ENCODE measurements at regions of chr17 and their contacts with region 1.

Region 1: GRCh38 chr17:38485146-38485468 is 56.8 kb downstream of the ARHGAP23 start:
- DNase-seq: no peak
- ATAC-seq: no peak
- H3K4me3 ChIP-seq: no peak overlapping the region
- H3K27ac ChIP-seq: peak overlapping the region in 7 of 12 donors; percentile 10 to 79 (median 58)
- H3K4me1 ChIP-seq: peaks cover 0 to 33% (median 13%) of the 10 kb centered on the region in 12 donors
- H3K27me3 ChIP-seq: no peaks in the 10 kb centered on the region
- CTCF ChIP-seq: no peak
- POLR2A ChIP-seq: no peak

Region 2: DNA sequence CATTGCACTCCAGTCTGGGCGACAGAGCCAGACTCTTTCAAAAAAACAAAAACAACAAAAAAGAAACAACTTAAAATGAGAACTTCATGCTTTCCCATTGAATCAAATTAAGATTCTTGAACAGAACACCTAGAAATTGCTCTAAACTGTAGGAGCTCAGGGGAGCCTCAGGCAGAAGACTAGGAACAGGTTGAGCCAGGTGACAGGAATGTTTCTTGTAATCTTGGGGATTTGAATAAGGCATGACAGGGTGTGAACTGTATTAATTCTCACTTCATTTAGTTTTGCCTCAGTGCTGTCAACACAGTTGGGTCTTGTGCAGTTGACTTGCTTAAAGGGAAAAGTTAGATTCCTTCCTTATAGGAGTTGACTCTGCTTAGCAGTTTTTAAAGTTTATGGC is 105.7 kb before region 1 on chr17:
- intact Hi-C with region 1: no loop called
- DNase-seq: no peak
- ATAC-seq: no peak
- H3K4me3 ChIP-seq: no peak overlapping the region
- H3K27ac ChIP-seq: no peak overlapping the region
- H3K4me1 ChIP-seq: no peaks in the 10 kb centered on the region
- H3K27me3 ChIP-seq: no peaks in the 10 kb centered on the region
- CTCF ChIP-seq: no peak
- POLR2A ChIP-seq: no peak

Region 3: DNA sequence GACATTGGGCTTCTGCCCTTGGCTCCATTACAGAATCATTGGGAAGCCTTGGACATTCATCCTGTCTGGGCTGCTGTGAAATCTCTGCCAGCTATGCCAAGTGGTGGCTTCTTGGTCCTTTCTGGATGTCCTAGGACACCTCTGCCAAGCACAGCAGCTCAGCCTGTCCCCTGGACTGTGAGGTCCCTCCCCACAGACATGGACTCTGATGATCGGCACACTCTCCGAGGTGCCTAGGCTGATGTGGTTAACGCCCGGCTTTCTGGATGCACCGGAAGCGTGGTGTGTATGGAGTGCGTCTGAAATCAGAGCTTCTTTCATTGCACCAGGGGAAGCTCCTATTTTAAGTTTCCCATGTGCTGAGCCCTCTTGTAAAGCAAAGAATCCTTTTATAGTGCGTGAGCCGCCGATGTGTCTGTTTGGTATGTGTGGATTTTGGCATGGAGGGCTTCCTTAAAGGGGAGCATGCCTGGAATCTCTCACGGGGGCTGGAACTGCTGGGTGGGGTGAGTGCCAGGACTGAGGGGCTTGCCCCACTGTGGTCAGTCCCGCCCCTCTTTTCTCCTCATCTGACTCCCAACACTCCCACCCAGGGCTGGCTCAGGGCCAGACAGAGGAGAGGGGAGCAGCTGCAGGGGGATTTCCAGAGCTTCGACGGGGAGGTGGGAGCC is 63.8 kb before region 1 on chr17:
- intact Hi-C with region 1: loop called (anchors 2 to 5 kb)
- DNase-seq: no peak
- ATAC-seq: peak; percentile 4 to 31 (median 12)
- H3K4me3 ChIP-seq: peak overlapping the region in 2 of 12 donors; percentile 15 to 17
- H3K27ac ChIP-seq: peak overlapping the region in 10 of 12 donors; percentile 27 to 79 (median 52)
- H3K4me1 ChIP-seq: peaks cover 0 to 65% (median 33%) of the 10 kb centered on the region in 12 donors
- H3K27me3 ChIP-seq: peaks cover 0 to 31% (median 19%) of the 10 kb centered on the region in 9 donors
- CTCF ChIP-seq: no peak
- POLR2A ChIP-seq: no peak

Region 4: DNA sequence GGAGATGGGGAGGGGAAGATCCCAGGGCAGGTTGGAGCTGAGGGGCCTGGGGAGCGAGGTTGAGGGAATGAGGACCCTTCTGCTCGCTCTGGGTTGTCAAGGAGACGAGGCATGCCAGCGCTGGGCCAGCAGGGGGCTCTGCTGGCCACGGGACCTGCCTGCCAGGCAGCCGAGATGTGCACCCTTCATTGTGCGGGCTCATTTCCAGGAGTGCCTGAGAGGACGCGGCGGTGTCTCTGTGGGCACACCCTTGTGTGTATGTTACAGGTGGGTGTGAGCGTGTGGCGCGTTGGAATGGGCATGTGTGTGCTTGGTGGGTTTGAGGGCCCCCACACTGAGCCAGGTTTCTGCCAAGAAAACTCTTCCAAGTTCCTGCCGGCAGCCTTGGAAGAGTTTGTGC is 41.0 kb before region 1 on chr17:
- intact Hi-C with region 1: loop called (anchors 2 to 5 kb)
- DNase-seq: peak; percentile 74 to 89 (median 77)
- ATAC-seq: peak; percentile 63 to 70 (median 70)
- H3K4me3 ChIP-seq: peak overlapping the region in 1 of 12 donors; percentile 21
- H3K27ac ChIP-seq: peak overlapping the region in 9 of 12 donors; percentile 15 to 95 (median 77)
- H3K4me1 ChIP-seq: peaks cover 9 to 75% (median 56%) of the 10 kb centered on the region in 12 donors
- H3K27me3 ChIP-seq: no peaks in the 10 kb centered on the region
- CTCF ChIP-seq: peak; percentile 76 to 96 (median 90)
- POLR2A ChIP-seq: no peak

Measured in heart left ventricle (tissue), 16 donors.